Gastrocnemius medialis (tissue), 4 donors: ENCODE measurements at regions of chr19 and their contacts with region 1.

Region 1: GRCh38 chr19:17060830-17061604 is 14.2 kb downstream of the HAUS8 start:
- DNase-seq: no peak
- ATAC-seq: no peak
- H3K4me3 ChIP-seq: no peak overlapping the region
- H3K27ac ChIP-seq: no peak overlapping the region
- H3K4me1 ChIP-seq: no peaks in the 10 kb centered on the region
- H3K27me3 ChIP-seq: no peaks in the 10 kb centered on the region
- CTCF ChIP-seq: no peak
- POLR2A ChIP-seq: no peak

Region 2: DNA sequence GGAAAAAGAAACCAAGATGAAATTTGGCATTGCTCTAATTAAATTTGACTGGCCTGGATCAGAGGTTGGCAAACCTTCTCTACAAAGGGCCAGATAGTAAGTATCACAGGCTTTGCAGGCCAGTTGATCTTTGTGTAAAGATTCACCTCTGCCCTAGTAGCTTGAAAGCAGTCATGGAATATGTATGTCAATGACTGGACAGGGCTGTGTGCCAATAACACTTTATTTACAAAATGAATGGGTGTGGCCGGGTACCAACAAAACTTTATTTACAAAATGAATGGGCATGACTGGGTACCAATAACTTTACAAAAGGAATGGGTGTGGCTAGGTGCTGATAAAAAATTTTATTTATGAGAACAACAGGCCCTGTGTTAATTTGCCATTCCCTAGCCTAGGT is 211.8 kb before region 1 on chr19:
- in situ Hi-C with region 1: no loop called
- intact Hi-C with region 1: no loop called
- DNase-seq: no peak
- ATAC-seq: no peak
- H3K4me3 ChIP-seq: no peak overlapping the region
- H3K27ac ChIP-seq: no peak overlapping the region
- H3K4me1 ChIP-seq: no peaks in the 10 kb centered on the region
- H3K27me3 ChIP-seq: no peaks in the 10 kb centered on the region
- CTCF ChIP-seq: no peak
- POLR2A ChIP-seq: no peak

Region 3: GRCh38 chr19:17292286-17293097 is 231.5 kb after region 1 on chr19:
- in situ Hi-C with region 1: loop called in 1 of 4 experiments (anchors 5 kb)
- intact Hi-C with region 1: no loop called
- DNase-seq: peak in 1 of 2 donors; percentile 20
- ATAC-seq: peak; percentile 64 to 74
- H3K4me3 ChIP-seq: peak overlapping the region; percentile 33 to 52 (median 51)
- H3K27ac ChIP-seq: peak overlapping the region in 3 of 4 donors; percentile 32 to 50 (median 32)
- H3K4me1 ChIP-seq: peaks cover 0 to 11% of the 10 kb centered on the region in 2 donors
- H3K27me3 ChIP-seq: no peaks in the 10 kb centered on the region
- CTCF ChIP-seq: peak in 3 of 5 experiments; percentile 39 to 61 (median 44)
- POLR2A ChIP-seq: no peak